GM12878 (cell line): ENCODE measurements at regions of chr2 and their contacts with region 1.

Region 1: DNA sequence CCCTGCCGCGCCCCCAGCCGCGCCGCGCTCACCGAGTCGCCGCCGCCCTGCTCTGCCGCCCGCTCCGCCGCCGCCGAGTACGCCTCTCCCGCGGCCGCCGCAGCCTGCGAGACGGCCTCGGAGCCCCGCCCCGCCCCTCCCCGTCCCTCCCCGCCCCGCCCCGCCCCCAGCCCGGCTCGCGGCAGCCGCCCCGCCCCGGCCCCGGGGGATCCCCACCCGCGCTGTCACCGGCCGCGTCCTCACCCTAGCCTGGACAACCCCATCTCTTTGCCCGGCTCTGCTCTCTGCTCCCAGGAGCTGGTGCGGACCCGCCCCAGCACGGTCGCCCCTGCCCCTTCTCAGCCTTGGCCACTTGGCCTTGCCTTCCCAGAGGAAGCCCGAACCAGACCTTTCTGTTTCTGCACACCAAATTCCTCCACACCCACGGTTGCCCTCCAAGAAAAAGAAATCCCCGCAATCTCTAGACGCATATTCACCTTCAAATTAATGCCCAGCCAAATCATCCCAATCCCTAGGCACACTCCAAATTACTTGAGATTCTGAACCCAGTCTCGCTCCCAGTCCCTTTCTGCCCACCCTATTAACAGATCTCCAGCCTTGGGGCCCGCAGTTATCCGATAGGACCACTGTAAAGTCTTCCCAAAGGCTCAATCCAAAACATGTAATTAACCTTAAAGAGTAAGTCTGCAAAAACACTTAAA is at the start of gene CYRIA:
- DNase-seq: no peak
- ATAC-seq: peak; percentile 74
- H3K4me3 ChIP-seq: peak within 1 kb of the TSS; percentile 61; the same call in 1 of the 2 replicates
- H3K27ac ChIP-seq: no peak within 1 kb of the TSS
- H3K4me1 ChIP-seq: peaks cover 30% of the 10 kb centered on the region
- H3K27me3 ChIP-seq: peaks cover 0 to 9% of the 10 kb centered on the region in 2 experiments; a peak in 3 of 4 replicates
- CTCF ChIP-seq: no peak
- EP300 ChIP-seq: no peak
- POLR2A ChIP-seq: no peak
- RAD21 ChIP-seq: no peak
- polyA plus RNA-seq, gene CYRIA: 5.4 to 7.8 TPM

Region 2: DNA sequence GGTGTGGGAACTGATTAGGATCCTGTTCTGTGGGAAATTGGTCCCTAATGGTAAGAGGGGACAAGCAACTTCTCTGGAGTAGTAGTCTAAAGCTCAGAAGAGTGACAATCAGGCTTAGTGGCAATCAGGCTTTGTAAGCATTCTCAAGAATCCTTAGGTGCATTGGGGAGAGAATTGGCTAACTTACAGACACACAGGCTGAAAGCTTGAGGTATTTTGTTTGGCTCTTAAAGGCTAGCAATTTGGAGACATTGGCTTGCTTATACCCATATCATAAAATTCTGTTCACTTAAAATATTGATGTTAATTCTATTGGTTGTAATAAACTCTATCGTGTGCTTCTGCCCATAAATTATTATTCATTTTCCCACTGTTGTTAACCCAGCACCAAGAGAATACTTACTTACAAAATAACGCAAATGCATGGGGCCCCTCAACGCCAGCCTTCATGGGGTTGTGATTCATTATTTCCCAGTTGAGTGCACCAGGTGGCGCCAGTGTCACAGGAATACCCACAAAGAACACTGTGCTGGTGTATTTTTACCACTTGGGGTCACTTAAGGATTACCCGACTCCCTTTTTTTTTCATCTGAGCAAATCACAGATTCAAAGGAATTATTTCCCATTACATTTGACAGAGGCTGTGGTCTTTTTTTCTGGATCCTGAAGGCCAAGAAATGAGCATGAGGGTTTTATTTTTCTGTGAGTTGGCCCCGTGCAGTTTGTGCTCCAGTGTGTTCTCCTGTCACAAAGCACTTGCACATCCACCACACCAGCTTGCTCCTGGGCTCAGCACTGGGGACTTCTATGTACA is 1028.7 kb before region 1 on chr2:
- CTCF ChIA-PET with region 1: no interaction called
- POLR2A ChIA-PET with region 1: no interaction called
- RAD21 ChIA-PET with region 1: no interaction called
- SMC1A ChIA-PET with region 1: no interaction called
- in situ Hi-C with region 1: no loop called
- intact Hi-C with region 1: no loop called
- DNase-seq: no peak
- ATAC-seq: peak; percentile 99
- H3K4me3 ChIP-seq: no peak overlapping the region
- H3K27ac ChIP-seq: no peak overlapping the region
- H3K4me1 ChIP-seq: no peaks in the 10 kb centered on the region
- H3K27me3 ChIP-seq: no peaks in the 10 kb centered on the region
- CTCF ChIP-seq: peak; percentile 72 to 97 (median 89); a peak in 5 of 6 replicates
- EP300 ChIP-seq: no peak
- POLR2A ChIP-seq: no peak
- RAD21 ChIP-seq: peak; percentile 89

Region 3: DNA sequence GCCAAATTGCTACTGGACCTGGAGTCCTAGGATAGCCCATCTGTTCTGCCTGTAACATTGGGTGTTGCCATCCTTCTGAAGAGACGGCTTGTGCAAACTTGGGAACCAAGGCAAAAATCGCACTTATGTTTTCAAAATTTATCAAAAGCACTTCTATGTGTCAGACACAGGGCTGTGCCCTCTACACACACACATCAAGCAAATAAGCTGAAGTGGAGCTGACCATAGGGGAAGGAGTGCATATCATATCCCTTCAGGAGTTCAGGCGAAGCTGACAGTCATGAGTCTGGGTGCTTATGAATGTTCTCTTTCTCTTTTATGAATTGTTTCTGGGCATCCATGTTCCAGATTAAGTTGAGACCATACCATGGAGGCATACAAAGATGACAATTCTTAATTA is 248.2 kb before region 1 on chr2:
- CTCF ChIA-PET with region 1: no interaction called
- POLR2A ChIA-PET with region 1: no interaction called
- RAD21 ChIA-PET with region 1: no interaction called
- SMC1A ChIA-PET with region 1: no interaction called
- in situ Hi-C with region 1: no loop called
- intact Hi-C with region 1: no loop called
- DNase-seq: no peak
- ATAC-seq: no peak
- H3K4me3 ChIP-seq: no peak overlapping the region
- H3K27ac ChIP-seq: no peak overlapping the region
- H3K4me1 ChIP-seq: no peaks in the 10 kb centered on the region
- H3K27me3 ChIP-seq: no peaks in the 10 kb centered on the region
- CTCF ChIP-seq: no peak
- EP300 ChIP-seq: no peak
- POLR2A ChIP-seq: no peak
- RAD21 ChIP-seq: no peak

Region 4: GRCh38 chr2:16429431-16430145 is 236.3 kb before region 1 on chr2:
- CTCF ChIA-PET with region 1: no interaction called
- POLR2A ChIA-PET with region 1: no interaction called
- RAD21 ChIA-PET with region 1: no interaction called
- SMC1A ChIA-PET with region 1: no interaction called
- in situ Hi-C with region 1: no loop called
- intact Hi-C with region 1: no loop called
- DNase-seq: no peak
- ATAC-seq: no peak
- H3K4me3 ChIP-seq: no peak overlapping the region
- H3K27ac ChIP-seq: no peak overlapping the region
- H3K4me1 ChIP-seq: no peaks in the 10 kb centered on the region
- H3K27me3 ChIP-seq: no peaks in the 10 kb centered on the region
- CTCF ChIP-seq: 0 out of 6 replicates have a peak, but pooled peaks of 2 of the 3 experiments have one; percentile 2 to 6
- EP300 ChIP-seq: no peak
- POLR2A ChIP-seq: no peak
- RAD21 ChIP-seq: no peak

Region 5: DNA sequence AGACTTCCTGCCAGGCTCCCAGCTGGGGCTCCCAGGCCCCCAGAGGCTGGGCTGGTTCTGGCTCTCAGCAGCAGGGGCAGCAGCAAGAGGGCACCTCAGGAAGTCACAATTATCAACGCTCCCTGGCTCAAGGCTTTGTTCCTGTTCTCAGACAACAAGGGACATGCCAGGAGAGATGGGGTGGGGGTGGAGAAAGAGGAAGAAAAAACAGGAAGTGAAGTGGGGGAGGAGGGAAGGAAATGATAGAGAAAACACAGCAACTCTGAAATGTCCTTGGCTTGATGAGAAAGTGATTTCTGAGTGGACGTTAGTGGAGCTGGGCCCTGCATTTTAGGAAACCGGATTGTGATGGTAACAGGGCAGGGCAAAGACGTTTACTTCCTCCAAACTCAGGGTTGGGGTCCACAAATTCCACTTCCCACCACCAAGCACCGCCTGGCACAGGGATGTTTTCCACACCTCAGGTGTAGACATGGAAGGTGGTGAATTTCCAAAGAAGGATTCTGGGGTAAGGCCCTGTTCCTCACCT is 40.6 kb before region 1 on chr2:
- CTCF ChIA-PET with region 1: interaction called, 73 read pairs
- POLR2A ChIA-PET with region 1: interaction called, 13 read pairs
- RAD21 ChIA-PET with region 1: interaction called, 185 read pairs
- SMC1A ChIA-PET with region 1: interaction called, 302 read pairs
- in situ Hi-C with region 1: no loop called
- intact Hi-C with region 1: no loop called
- DNase-seq: no peak
- ATAC-seq: peak; percentile 43
- H3K4me3 ChIP-seq: no peak overlapping the region
- H3K27ac ChIP-seq: no peak overlapping the region
- H3K4me1 ChIP-seq: peaks cover 16% of the 10 kb centered on the region
- H3K27me3 ChIP-seq: peaks cover 0 to 11% of the 10 kb centered on the region in 2 experiments
- CTCF ChIP-seq: no peak
- EP300 ChIP-seq: no peak
- POLR2A ChIP-seq: no peak
- RAD21 ChIP-seq: no peak

Region 6: DNA sequence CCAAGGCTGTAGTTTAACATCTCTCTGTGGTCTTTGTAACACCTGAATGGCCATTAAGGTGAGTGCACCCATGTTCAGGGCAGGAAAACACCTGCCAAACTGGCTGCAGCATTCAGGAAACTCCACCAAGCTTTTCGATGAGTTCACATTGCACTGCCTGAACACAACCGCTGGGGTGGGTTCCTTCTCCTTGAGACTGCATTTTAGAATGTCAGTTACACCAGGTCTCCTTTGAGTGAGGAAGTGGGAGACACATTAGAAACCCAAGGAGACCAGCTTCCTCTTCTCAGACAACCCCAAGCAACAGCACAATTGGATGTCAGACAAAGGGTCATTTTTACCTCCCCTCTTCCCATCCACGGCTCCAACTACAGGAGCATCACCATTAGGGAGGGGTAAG is 35.4 kb before region 1 on chr2:
- CTCF ChIA-PET with region 1: interaction called, 73 read pairs
- POLR2A ChIA-PET with region 1: interaction called, 13 read pairs
- RAD21 ChIA-PET with region 1: interaction called, 185 read pairs
- SMC1A ChIA-PET with region 1: interaction called, 302 read pairs
- in situ Hi-C with region 1: no loop called
- intact Hi-C with region 1: no loop called
- DNase-seq: no peak
- ATAC-seq: peak; percentile 69
- H3K4me3 ChIP-seq: no peak overlapping the region
- H3K27ac ChIP-seq: no peak overlapping the region
- H3K4me1 ChIP-seq: peaks cover 10% of the 10 kb centered on the region
- H3K27me3 ChIP-seq: peaks cover 0 to 16% of the 10 kb centered on the region in 2 experiments
- CTCF ChIP-seq: peak; percentile 18 to 31 (median 27); a peak in 3 of 6 replicates
- EP300 ChIP-seq: no peak
- POLR2A ChIP-seq: no peak
- RAD21 ChIP-seq: peak; percentile 60

Region 7: DNA sequence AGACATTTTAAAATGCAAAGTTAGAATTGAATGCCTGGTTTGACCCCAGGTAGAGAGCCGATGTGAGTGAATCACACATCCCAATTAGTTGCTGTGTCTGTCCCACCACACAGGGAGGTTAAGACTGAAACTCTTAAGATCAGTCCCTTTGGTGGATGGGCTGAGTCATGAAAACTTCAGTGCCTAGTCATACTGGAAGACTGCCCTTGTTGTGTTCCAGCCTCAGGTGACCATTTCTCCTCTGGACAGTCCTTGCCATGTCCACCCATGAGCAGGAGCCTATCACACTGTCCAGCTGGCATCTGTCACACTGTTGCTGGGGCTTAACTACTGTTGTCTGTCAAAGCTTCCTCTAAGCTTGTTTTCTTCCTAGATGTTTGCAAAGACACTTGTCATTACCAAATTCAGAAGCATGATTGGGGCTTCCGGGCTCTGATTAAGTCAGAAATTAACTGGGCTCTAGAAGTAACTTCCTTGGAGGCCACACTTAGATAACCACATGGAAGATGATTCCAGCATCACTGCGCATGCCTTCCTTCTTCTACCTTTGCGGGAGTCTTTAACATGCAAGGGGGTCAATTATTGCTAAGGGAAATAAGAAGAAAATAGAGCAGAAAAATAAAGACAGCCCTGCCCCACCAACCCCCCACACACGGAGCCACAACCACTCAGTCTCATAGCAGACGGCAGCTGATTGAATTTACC is 21.5 kb before region 1 on chr2:
- CTCF ChIA-PET with region 1: interaction called, 4 read pairs
- POLR2A ChIA-PET with region 1: interaction called, 9 read pairs
- RAD21 ChIA-PET with region 1: interaction called, 3 read pairs
- SMC1A ChIA-PET with region 1: interaction called, 25 read pairs
- in situ Hi-C with region 1: no loop called
- intact Hi-C with region 1: no loop called
- DNase-seq: no peak
- ATAC-seq: peak; percentile 79
- H3K4me3 ChIP-seq: no peak overlapping the region
- H3K27ac ChIP-seq: no peak overlapping the region
- H3K4me1 ChIP-seq: no peaks in the 10 kb centered on the region
- H3K27me3 ChIP-seq: peaks cover 0 to 5% of the 10 kb centered on the region in 2 experiments; a peak in 1 of 4 replicates
- CTCF ChIP-seq: no peak
- EP300 ChIP-seq: 0 out of 4 replicates have a peak, but pooled peaks of 1 of the 2 experiments have one; percentile 13
- POLR2A ChIP-seq: no peak
- RAD21 ChIP-seq: no peak

Region 8: GRCh38 chr2:16650287-16651249 is 15.3 kb before region 1 on chr2:
- CTCF ChIA-PET with region 1: interaction called, 82 read pairs
- POLR2A ChIA-PET with region 1: interaction called, 187 read pairs
- RAD21 ChIA-PET with region 1: interaction called, 202 read pairs
- SMC1A ChIA-PET with region 1: interaction called, 262 read pairs
- in situ Hi-C with region 1: no loop called
- intact Hi-C with region 1: no loop called
- DNase-seq: no peak
- ATAC-seq: peak; percentile 6; the same call in 2 of the 3 replicates
- H3K4me3 ChIP-seq: no peak overlapping the region
- H3K27ac ChIP-seq: no peak overlapping the region
- H3K4me1 ChIP-seq: peaks cover 40% of the 10 kb centered on the region
- H3K27me3 ChIP-seq: no peaks in the 10 kb centered on the region; a peak in 1 of 4 replicates
- CTCF ChIP-seq: no peak
- EP300 ChIP-seq: 0 out of 4 replicates have a peak, but pooled peaks of 1 of the 2 experiments have one; percentile 35
- POLR2A ChIP-seq: no peak
- RAD21 ChIP-seq: no peak

Region 9: DNA sequence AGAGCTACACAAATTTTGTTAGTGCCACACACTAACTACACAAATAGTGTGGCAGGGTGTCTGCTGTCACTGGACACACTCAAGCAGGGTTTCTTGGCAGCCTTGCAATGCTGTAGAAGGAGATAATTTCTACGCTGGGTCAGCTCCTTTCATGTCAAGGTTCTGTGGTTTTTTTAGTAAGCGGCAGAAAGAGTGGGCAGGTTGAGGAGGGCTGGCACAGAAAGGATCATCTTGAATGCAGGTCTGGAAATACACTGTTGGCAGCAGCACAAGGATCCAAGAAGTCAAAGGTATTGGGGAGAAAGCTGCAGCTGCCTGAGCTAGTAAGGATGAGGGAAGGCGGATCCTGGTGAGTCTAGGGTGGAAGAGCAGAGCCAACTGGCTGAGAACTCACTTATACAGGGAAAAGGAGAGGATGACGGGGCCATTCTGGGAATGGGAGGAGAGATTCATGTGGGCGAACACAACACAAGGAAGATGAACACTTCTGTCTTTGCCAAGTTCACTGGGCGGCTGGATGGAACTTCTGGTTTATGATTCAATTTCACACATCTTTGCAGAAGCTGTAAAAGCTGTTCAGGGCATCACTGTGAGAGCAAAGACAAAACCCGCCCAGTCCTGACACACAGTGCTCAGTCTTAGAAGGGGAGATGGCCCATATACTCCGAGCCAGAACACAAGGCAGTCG is 16.7 kb after region 1 on chr2:
- CTCF ChIA-PET with region 1: interaction called, 5 read pairs
- POLR2A ChIA-PET with region 1: interaction called, 3 read pairs
- RAD21 ChIA-PET with region 1: interaction called, 3 read pairs
- SMC1A ChIA-PET with region 1: interaction called, 15 read pairs
- in situ Hi-C with region 1: no loop called
- intact Hi-C with region 1: no loop called
- DNase-seq: no peak
- ATAC-seq: no peak
- H3K4me3 ChIP-seq: no peak overlapping the region
- H3K27ac ChIP-seq: no peak overlapping the region
- H3K4me1 ChIP-seq: no peaks in the 10 kb centered on the region
- H3K27me3 ChIP-seq: no peaks in the 10 kb centered on the region; a peak in 1 of 4 replicates
- CTCF ChIP-seq: no peak
- EP300 ChIP-seq: no peak
- POLR2A ChIP-seq: no peak
- RAD21 ChIP-seq: no peak

Region 10: DNA sequence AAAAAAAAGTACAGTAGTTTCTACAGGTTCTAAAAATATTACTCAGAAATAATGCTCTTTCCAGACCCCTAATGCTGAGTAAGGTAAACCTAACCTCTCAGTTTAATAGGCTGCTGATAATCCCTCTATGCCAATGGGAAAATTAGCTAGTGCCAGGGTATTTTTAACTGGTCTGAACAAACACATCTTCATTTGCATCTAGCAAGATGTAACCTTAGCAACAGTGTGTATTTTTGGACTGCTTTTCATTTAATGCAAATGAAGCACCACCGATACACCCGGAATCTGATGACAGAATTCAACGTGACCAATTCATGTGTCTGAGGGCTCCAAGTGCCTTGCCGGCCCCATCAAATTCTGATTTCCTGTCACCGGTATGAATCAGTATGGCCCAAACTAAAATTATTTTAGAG is 47.1 kb after region 1 on chr2:
- CTCF ChIA-PET with region 1: interaction called, 4 read pairs
- POLR2A ChIA-PET with region 1: interaction called, 7 read pairs
- RAD21 ChIA-PET with region 1: interaction called, 156 read pairs
- SMC1A ChIA-PET with region 1: interaction called, 21 read pairs
- in situ Hi-C with region 1: no loop called
- intact Hi-C with region 1: no loop called
- DNase-seq: no peak
- ATAC-seq: peak; percentile 92
- H3K4me3 ChIP-seq: no peak overlapping the region
- H3K27ac ChIP-seq: no peak overlapping the region
- H3K4me1 ChIP-seq: peaks cover 2% of the 10 kb centered on the region; the same call in 1 of the 2 replicates
- H3K27me3 ChIP-seq: 0 out of 4 replicates have a peak, but pooled peaks cover 0 to 2% of the 10 kb centered on the region in 2 experiments
- CTCF ChIP-seq: no peak
- EP300 ChIP-seq: peak; percentile 27 to 54; a peak in 2 of 4 replicates
- POLR2A ChIP-seq: no peak
- RAD21 ChIP-seq: no peak